CD4-positive, alpha-beta memory T cell (primary cell): ENCODE measurements at regions of chr20 and their contacts with region 1.

Region 1: GRCh38 chr20:34704177-34705007 is at the start of gene TP53INP2:
- DNase-seq: peak; percentile 89 to 94 (median 90)
- H3K4me3 ChIP-seq: peak within 1 kb of the TSS; percentile 56 to 64
- H3K4me3 Mint-ChIP-seq: peak within 1 kb of the TSS; percentile 88 to 98 (median 95)
- H3K27ac ChIP-seq: peak within 1 kb of the TSS; percentile 90
- H3K27ac Mint-ChIP-seq: peak within 1 kb of the TSS; percentile 94 to 100 (median 99)
- H3K4me1 ChIP-seq: peaks cover 23% of the 10 kb centered on the region
- H3K4me1 Mint-ChIP-seq: peaks cover 12 to 50% (median 19%) of the 10 kb centered on the region in 4 donors
- H3K27me3 ChIP-seq: no peaks in the 10 kb centered on the region
- H3K27me3 Mint-ChIP-seq: no peaks in the 10 kb centered on the region
- total RNA-seq, gene TP53INP2: 0.86 to 1.2 TPM

Region 2: GRCh38 chr20:34215711-34216381 is 488.5 kb before region 1 on chr20:
- CTCF ChIA-PET with region 1: no interaction called
- POLR2A ChIA-PET with region 1: no interaction called
- intact Hi-C with region 1: no loop called
- DNase-seq: peak in 2 of 5 donors; percentile 3 to 12
- H3K4me3 ChIP-seq: no peak overlapping the region
- H3K4me3 Mint-ChIP-seq: peak overlapping the region in 6 of 8 donors; percentile 38 to 74 (median 68)
- H3K27ac ChIP-seq: no peak overlapping the region
- H3K27ac Mint-ChIP-seq: no peak overlapping the region
- H3K4me1 ChIP-seq: peaks cover 5% of the 10 kb centered on the region
- H3K4me1 Mint-ChIP-seq: peaks cover 0 to 11% (median 8%) of the 10 kb centered on the region in 4 donors
- H3K27me3 ChIP-seq: peaks cover 5% of the 10 kb centered on the region
- H3K27me3 Mint-ChIP-seq: peaks cover 21 to 22% of the 10 kb centered on the region in 2 donors

Region 3: DNA sequence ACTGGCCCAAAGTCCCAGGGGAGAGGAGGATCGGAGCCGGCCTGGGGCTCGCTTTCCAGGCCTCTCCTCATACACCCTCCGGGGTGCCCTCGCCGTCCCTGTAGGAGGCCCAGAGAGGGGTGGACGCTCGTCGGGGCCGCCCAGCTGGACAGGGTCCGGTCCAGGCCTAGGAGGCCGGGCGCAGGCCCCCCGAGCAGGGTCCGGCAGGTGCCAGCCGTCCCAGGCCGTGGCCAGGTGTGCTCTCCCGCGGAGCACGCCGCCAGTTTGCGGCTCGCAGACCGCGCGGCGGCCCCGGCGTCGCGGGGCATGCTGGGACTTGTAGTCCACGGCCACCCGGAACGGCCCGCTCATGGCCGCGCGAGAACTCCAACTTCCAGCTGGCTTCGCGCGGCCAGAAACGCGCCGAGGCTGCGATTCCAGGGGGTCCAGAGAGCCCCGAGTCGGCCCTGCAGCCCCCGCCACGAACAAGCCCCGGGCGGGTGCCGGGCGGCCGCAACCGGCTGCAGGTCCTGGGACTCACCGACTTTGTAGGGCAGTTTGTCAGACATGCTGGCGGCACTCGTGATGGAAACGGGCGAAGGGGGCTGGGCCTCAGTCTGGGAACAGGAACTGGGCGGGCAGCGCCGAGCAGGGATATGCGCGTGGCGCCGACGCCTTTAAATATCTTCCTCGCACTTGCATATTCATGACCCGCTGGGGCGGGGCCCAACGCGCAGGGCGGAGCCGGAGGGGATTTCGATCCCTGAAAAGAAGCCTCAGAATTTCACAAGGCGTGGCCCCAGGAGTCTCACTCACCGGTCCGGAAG is 401.5 kb before region 1 on chr20 and contains the start of gene AHCY:
- CTCF ChIA-PET with region 1: no interaction called
- POLR2A ChIA-PET with region 1: interaction called, 3 read pairs
- intact Hi-C with region 1: loop called (anchors 1 kb)
- DNase-seq: peak; percentile 90 to 95 (median 93)
- H3K4me3 ChIP-seq: peak within 1 kb of the TSS; percentile 86 to 94
- H3K4me3 Mint-ChIP-seq: peak within 1 kb of the TSS; percentile 90 to 98 (median 95)
- H3K27ac ChIP-seq: peak within 1 kb of the TSS; percentile 81
- H3K27ac Mint-ChIP-seq: peak within 1 kb of the TSS; percentile 87 to 98 (median 97)
- H3K4me1 ChIP-seq: peaks cover 11% of the 10 kb centered on the region
- H3K4me1 Mint-ChIP-seq: peaks cover 9 to 26% (median 10%) of the 10 kb centered on the region in 4 donors
- H3K27me3 ChIP-seq: no peaks in the 10 kb centered on the region
- H3K27me3 Mint-ChIP-seq: no peaks in the 10 kb centered on the region
- total RNA-seq, gene AHCY: 23.1 to 24.2 TPM

Region 4: DNA sequence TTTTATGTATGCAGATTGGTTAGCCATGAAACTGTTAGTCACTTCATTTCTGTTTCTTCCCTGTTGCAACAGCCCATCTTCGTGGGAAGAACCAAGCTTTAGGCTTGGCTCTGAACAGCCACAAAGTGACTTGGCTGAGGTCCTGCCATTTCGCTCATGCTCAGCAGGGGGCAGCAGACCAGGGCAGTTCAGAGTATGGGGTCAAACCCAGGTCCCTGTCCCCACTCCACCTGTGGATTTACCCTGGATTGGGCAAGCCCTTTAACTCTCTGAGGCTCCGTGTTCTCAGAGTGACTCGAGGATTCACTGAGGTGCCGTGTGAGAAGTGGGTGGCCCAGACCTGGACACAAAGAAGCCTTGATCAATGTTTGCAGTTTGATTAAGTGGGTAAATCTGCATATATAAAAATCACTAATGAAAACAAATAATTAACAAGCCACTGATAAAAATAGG is 165.7 kb before region 1 on chr20:
- CTCF ChIA-PET with region 1: interaction called, 148 read pairs
- POLR2A ChIA-PET with region 1: interaction called, 4 read pairs
- intact Hi-C with region 1: loop called (anchors 1 kb)
- DNase-seq: peak in 3 of 5 donors; percentile 41 to 50 (median 47)
- H3K4me3 ChIP-seq: no peak overlapping the region
- H3K4me3 Mint-ChIP-seq: no peak overlapping the region
- H3K27ac ChIP-seq: no peak overlapping the region
- H3K27ac Mint-ChIP-seq: peak overlapping the region; percentile 29 to 73 (median 63)
- H3K4me1 ChIP-seq: peaks cover 34% of the 10 kb centered on the region
- H3K4me1 Mint-ChIP-seq: peaks cover 20 to 43% (median 33%) of the 10 kb centered on the region in 4 donors
- H3K27me3 ChIP-seq: no peaks in the 10 kb centered on the region
- H3K27me3 Mint-ChIP-seq: no peaks in the 10 kb centered on the region

Region 5: GRCh38 chr20:34676642-34677373 is 27.6 kb before region 1 on chr20 and contains the start of gene PIGU:
- CTCF ChIA-PET with region 1: interaction called, 4 read pairs
- POLR2A ChIA-PET with region 1: interaction called, 34 read pairs
- intact Hi-C with region 1: loop called (anchors 1 kb)
- DNase-seq: peak; percentile 94 to 96 (median 96)
- H3K4me3 ChIP-seq: peak within 1 kb of the TSS; percentile 57 to 67
- H3K4me3 Mint-ChIP-seq: peak within 1 kb of the TSS; percentile 95 to 99 (median 97)
- H3K27ac ChIP-seq: peak within 1 kb of the TSS; percentile 66
- H3K27ac Mint-ChIP-seq: peak within 1 kb of the TSS; percentile 93 to 98 (median 97)
- H3K4me1 ChIP-seq: peaks cover 19% of the 10 kb centered on the region
- H3K4me1 Mint-ChIP-seq: peaks cover 11 to 25% (median 19%) of the 10 kb centered on the region in 4 donors
- H3K27me3 ChIP-seq: no peaks in the 10 kb centered on the region
- H3K27me3 Mint-ChIP-seq: no peaks in the 10 kb centered on the region
- total RNA-seq, gene PIGU: 15.1 to 18.2 TPM